ENCODE measurements at regions of chr10 and their contacts with region 1.

Region 1: DNA sequence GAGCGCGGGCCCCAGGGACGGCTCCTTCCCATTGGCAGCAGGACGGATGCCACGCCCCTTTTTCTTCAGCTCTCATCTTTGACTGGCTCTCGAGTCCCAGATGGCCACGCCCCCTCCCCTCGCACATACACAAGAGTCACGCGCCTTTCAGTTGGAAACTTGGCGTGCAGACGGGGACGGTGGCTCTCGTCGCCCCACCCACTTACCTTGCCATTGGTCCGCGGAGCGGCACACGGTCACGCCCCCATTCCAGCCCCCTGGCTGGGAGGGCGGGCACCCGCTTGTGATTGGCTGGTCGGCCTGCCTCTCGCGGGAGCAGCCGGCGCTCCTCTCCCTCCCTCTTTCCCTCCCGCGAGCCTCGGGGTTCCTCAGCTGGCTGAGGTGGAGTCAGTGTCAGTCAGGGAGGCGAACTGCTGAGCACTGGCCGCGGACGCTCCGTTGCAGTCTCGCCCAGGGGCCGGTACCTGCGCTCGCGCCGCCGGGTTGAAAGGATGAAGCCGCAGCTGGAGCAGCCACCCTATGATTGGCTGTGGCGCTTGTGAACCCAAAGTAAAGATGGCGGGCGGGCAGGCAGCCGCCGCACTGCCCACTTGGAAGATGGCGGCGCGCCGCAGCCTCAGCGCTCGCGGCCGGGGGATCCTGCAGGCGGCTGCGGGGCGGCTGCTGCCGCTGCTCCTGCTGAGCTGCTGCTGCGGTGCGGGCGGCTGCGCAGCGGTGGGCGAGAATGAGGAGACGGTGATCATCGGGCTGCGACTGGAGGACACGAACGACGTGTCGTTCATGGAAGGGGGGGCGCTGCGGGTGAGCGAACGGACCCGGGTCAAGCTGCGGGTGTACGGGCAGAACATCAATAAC is at the start of gene CNNM2:
- DNase-seq: peak; percentile 100
- H3K4me3 Mint-ChIP-seq: peak within 1 kb of the TSS; percentile 92
- H3K27ac Mint-ChIP-seq: peak within 1 kb of the TSS; percentile 88
- H3K4me1 Mint-ChIP-seq: peaks cover 47% of the 10 kb centered on the region
- H3K27me3 Mint-ChIP-seq: peaks cover 3% of the 10 kb centered on the region
- total RNA-seq, gene CNNM2: 7.2 and 7.5 TPM in 2 replicates

Region 2: DNA sequence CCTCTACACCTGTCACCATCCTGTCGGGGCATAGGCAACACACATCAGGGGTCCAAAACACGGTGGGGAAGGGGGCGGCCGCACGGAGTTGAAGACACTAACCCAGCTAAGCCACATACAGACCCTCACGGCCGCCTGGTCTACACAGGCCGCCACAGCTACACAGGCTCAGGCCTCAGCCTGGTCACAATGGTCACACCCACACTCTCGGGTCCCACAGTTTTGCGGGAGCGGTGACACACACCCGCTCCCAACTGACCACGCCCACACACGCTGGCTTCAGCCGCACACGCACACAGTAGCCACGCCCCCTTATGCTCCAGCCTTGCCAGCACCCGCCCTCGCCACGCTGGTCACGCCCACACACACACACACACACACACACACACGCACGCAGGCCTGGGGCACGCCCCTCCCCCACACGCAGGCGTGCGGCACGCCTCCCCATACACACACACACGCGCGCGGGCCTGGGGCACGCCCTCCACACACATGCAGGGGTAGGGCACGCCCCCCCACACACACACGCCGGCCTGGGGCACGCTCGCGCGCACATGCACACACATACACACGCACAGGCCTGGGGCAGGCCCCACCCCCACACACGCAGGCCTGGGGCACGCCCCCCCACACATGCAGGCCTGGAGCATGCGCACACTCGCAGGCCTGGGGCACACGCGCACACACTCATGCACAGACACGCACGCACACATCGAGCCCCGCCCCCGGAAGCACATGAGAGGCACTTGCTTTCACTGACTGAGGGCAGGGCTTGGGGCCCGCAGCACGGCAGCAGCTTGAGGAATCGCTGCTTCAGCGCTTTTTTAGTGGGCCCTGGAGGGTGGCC is 1087.6 kb before region 1 on chr10:
- intact Hi-C with region 1: loop called (anchors 10 kb)
- DNase-seq: peak; percentile 88
- H3K4me3 Mint-ChIP-seq: peak overlapping the region; percentile 71
- H3K27ac Mint-ChIP-seq: peak overlapping the region; percentile 92
- H3K4me1 Mint-ChIP-seq: peaks cover 48% of the 10 kb centered on the region
- H3K27me3 Mint-ChIP-seq: no peaks in the 10 kb centered on the region

Region 3: GRCh38 chr10:102835007-102835482 is 83.1 kb before region 1 on chr10:
- intact Hi-C with region 1: loop called (anchors 5 kb)
- DNase-seq: peak; percentile 58
- H3K4me3 Mint-ChIP-seq: no peak overlapping the region
- H3K27ac Mint-ChIP-seq: no peak overlapping the region
- H3K4me1 Mint-ChIP-seq: peaks cover 5% of the 10 kb centered on the region
- H3K27me3 Mint-ChIP-seq: peaks cover 11% of the 10 kb centered on the region

Region 4: DNA sequence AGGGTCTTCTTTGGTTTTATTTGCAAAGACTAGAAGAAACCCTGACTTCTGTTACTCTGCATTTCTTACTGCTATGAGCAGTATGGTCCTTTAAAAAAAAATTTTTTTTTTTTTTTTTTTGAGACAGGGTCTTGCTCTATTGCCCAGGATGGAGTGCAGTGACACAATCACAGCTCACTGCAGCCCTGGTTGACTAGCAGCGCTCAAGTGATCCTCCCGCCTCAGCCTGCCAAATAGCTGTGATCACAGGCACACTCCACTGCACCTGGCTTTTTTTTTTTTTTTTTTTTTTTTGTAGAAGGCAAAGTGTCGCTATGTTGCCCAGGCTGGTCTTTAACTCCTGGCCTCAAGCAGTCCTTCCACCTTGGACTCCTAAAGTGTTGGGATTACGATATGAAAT is 17.3 kb after region 1 on chr10:
- intact Hi-C with region 1: loop called (anchors 1 kb)
- DNase-seq: no peak
- H3K4me3 Mint-ChIP-seq: no peak overlapping the region
- H3K27ac Mint-ChIP-seq: peak overlapping the region; percentile 87
- H3K4me1 Mint-ChIP-seq: peaks cover 16% of the 10 kb centered on the region
- H3K27me3 Mint-ChIP-seq: no peaks in the 10 kb centered on the region

Region 5: DNA sequence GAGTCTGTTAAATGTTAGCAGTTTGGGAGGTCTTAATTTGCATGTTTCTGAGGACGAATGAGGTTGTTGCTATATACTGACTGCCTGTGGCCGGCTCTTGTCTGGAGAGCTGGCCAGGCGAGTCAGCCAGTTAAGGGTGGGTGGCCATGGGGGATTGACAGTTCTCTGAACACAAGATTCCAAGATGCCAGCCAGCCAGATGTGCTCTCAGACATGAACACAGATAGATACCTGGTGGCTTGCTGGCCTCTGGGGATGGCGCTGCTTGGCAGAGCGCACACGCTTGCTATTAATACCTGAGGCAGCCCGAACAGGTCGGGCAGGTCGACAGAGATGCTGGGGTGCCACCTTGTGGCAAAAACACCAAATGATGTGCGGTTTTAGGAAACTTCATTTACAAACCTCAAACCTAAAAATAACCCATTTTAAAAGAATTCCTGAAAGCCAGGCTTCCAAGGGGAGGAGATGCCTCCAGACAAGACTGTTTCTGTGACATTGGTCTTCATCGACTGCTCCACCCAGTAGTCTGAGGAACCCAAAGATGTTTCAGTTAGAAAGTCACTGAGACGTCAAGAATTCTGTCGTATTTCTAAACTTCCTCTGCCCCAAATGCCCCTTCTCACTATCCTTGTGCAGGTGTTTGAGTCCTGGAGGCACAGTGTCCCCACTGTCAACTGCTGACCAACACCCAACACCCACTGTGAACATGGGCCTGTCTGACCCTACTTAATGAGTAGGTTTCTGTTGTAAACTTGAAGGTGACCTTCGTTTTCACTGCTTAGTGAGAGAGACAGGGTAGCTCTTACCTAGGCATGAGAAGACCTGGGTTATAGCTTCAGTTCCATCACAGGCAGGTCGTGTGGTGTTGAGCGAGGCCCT is 151.5 kb after region 1 on chr10:
- intact Hi-C with region 1: loop called (anchors 1 kb)
- DNase-seq: peak; percentile 58
- H3K4me3 Mint-ChIP-seq: no peak overlapping the region
- H3K27ac Mint-ChIP-seq: peak overlapping the region; percentile 78
- H3K4me1 Mint-ChIP-seq: peaks cover 26% of the 10 kb centered on the region
- H3K27me3 Mint-ChIP-seq: no peaks in the 10 kb centered on the region

Region 6: GRCh38 chr10:103367782-103368518 is 449.8 kb after region 1 on chr10 and contains the start of gene TAF5:
- intact Hi-C with region 1: loop called (anchors 1 kb)
- DNase-seq: peak; percentile 90
- H3K4me3 Mint-ChIP-seq: peak within 1 kb of the TSS; percentile 90
- H3K27ac Mint-ChIP-seq: peak within 1 kb of the TSS; percentile 92
- H3K4me1 Mint-ChIP-seq: peaks cover 8% of the 10 kb centered on the region
- H3K27me3 Mint-ChIP-seq: no peaks in the 10 kb centered on the region
- total RNA-seq, gene TAF5: 9.5 and 10.7 TPM in 2 replicates